Activated CD4-positive, alpha-beta T cell treated with anti-CD3 and anti-CD28 coated beads for 36 hours (primary cell): ENCODE measurements at regions of chr17 and their contacts with region 1.

Region 1: GRCh38 chr17:79009397-79010308 is at the start of gene CANT1:
- DNase-seq: peak; percentile 90
- ATAC-seq: peak; percentile 97
- H3K4me3 Mint-ChIP-seq: peak within 1 kb of the TSS; percentile 78
- H3K27ac Mint-ChIP-seq: peak within 1 kb of the TSS; percentile 88
- H3K4me1 Mint-ChIP-seq: peaks cover 40% of the 10 kb centered on the region
- H3K27me3 Mint-ChIP-seq: peaks cover 2% of the 10 kb centered on the region
- total RNA-seq, gene CANT1: 44.0 to 52.9 TPM

Region 2: GRCh38 chr17:78214706-78215061 is 795.0 kb before region 1 on chr17:
- CTCF ChIA-PET with region 1: no interaction called
- POLR2A ChIA-PET with region 1: no interaction called
- intact Hi-C with region 1: loop called in 1 of 2 experiments (anchors 1 kb)
- DNase-seq: no peak
- ATAC-seq: no peak
- H3K4me3 Mint-ChIP-seq: peak overlapping the region; percentile 89
- H3K27ac Mint-ChIP-seq: peak overlapping the region; percentile 78
- H3K4me1 Mint-ChIP-seq: peaks cover 5% of the 10 kb centered on the region
- H3K27me3 Mint-ChIP-seq: no peaks in the 10 kb centered on the region

Region 3: GRCh38 chr17:79074650-79075445 is 65.2 kb after region 1 on chr17 and contains the start of gene ENGASE:
- CTCF ChIA-PET with region 1: no interaction called
- POLR2A ChIA-PET with region 1: no interaction called
- intact Hi-C with region 1: loop called in 1 of 2 experiments (anchors 1 kb)
- DNase-seq: peak; percentile 96
- ATAC-seq: peak; percentile 99
- H3K4me3 Mint-ChIP-seq: peak within 1 kb of the TSS; percentile 79
- H3K27ac Mint-ChIP-seq: peak within 1 kb of the TSS; percentile 49
- H3K4me1 Mint-ChIP-seq: peaks cover 14% of the 10 kb centered on the region
- H3K27me3 Mint-ChIP-seq: no peaks in the 10 kb centered on the region
- total RNA-seq, gene ENGASE: 17.3 to 23.7 TPM